ENCODE measurements at regions of chr21 and their contacts with region 1.

Region 1: DNA sequence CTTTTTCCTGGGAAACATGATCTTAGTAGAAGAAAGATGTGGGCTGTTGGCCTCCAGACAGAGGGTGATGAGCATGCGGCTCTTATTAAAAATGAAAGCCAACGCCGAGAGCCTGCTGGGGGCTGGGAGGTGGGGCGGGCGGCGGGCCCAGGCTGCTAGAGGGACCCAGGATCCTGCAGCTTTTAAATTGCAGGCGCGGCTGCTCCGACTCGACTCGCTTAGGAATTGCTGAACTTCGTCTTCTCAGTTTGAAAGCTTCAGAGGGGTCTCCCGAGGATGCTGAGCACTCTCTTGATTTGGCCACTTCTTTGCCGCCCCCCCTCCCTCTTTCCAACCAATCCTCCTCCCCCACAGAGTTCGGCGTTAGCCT is 1.2 kb downstream of the AGPAT3 start:
- DNase-seq: peak; percentile 55
- H3K4me3 ChIP-seq: peak overlapping the region; percentile 68 to 87
- H3K27ac ChIP-seq: peak overlapping the region; percentile 92 to 94
- H3K4me1 ChIP-seq: peaks cover 11% of the 10 kb centered on the region
- H3K27me3 ChIP-seq: no peaks in the 10 kb centered on the region
- CTCF ChIP-seq: no peak
- POLR2A ChIP-seq: no peak

Region 2: DNA sequence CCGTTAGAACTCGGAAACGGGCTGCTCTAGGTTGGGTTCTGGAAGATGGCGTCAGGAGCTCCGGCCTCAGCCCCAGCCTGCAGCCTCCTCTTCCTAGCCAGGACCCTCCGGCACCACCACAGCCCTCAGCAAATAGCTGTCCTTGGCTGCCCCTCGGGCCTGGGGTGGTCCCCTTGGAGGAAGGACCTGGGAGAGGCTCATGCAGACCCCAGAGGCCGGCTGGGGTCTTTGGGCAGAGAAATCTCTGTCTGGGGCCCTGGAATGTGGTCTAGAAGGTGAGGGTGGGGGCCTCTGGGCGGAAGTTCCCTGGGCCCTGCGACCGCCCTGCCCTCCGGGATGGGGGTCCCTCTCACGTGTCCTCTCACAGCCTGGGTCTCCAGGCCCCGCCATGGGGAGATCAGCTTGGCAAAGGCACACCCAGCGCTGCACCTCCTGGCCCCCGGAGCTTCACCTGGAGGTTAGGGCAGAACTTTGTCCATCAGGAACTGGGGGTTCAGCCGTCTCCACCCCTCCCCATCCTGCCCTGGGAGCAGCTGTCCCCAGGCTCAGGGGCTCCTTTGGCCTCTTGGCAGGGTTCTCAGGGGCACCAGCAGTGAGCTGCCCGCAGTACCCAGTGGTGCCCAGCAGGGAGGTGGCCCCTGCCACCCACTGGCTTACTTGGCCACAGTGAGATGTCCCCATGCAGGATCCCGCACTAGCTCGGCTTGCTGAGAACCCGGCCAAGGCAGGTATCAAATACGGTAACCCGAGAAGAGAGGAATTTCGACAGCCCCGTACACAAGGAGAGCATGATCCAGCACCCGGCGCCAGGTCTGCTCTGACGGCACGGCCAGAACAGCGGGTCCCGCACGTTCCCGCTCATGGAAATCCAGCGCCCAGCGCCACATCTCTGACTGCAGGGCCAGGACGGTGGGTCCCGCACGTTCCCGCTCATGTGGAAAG is 40.3 kb before region 1 on chr21:
- intact Hi-C with region 1: loop called (anchors 2 kb)
- DNase-seq: peak; percentile 41
- H3K4me3 ChIP-seq: no peak overlapping the region
- H3K27ac ChIP-seq: no peak overlapping the region
- H3K4me1 ChIP-seq: no peaks in the 10 kb centered on the region
- H3K27me3 ChIP-seq: no peaks in the 10 kb centered on the region
- CTCF ChIP-seq: peak in 2 of 4 experiments; percentile 11 to 17
- POLR2A ChIP-seq: no peak

Region 3: GRCh38 chr21:44517175-44517899 is 651.1 kb after region 1 on chr21:
- intact Hi-C with region 1: no loop called
- DNase-seq: no peak
- H3K4me3 ChIP-seq: no peak overlapping the region
- H3K27ac ChIP-seq: no peak overlapping the region
- H3K4me1 ChIP-seq: no peaks in the 10 kb centered on the region
- H3K27me3 ChIP-seq: no peaks in the 10 kb centered on the region
- CTCF ChIP-seq: no peak
- POLR2A ChIP-seq: no peak

Measured in prostate gland (tissue), 2 donors.